Endothelial cell of umbilical vein (primary cell): ENCODE measurements at regions of chrX and their contacts with region 1.

Region 1: GRCh38 chrX:139739138-139739537 is 31.2 kb upstream of the MCF2 start:
- DNase-seq: peak; percentile 44
- H3K4me3 ChIP-seq: no peak overlapping the region
- H3K27ac ChIP-seq: peak overlapping the region; percentile 63
- H3K4me1 ChIP-seq: peaks cover 20% of the 10 kb centered on the region
- H3K27me3 ChIP-seq: no peaks in the 10 kb centered on the region
- CTCF ChIP-seq: no peak
- POLR2A ChIP-seq: no peak

Region 2: GRCh38 chrX:139559383-139560042 is 179.6 kb before region 1 on chrX:
- CTCF ChIA-PET with region 1: no interaction called
- POLR2A ChIA-PET with region 1: no interaction called
- dilution Hi-C with region 1: no loop called
- intact Hi-C with region 1: no loop called
- DNase-seq: peak; percentile 26
- H3K4me3 ChIP-seq: no peak overlapping the region
- H3K27ac ChIP-seq: no peak overlapping the region
- H3K4me1 ChIP-seq: no peaks in the 10 kb centered on the region
- H3K27me3 ChIP-seq: no peaks in the 10 kb centered on the region
- CTCF ChIP-seq: peak; percentile 13 to 29
- POLR2A ChIP-seq: no peak

Region 3: DNA sequence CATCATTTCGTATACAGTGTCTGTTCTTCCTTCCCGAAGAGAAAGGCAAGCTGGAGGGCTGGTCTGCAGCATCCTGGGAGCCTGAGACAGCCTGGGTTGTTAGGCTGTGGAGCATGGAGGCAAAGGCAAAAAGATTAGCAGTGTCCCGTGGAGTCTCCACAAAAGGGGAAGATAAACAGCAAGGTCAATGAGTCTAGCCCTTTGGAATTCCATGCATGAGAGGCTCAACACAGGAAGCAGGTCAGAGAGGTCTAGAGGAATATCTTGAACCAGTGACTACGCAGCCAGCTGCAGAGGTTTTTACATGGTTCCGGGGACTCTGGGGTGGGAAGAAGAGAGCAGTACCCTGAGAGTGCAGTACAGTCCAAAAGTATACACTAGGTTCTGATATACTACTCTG is 19.0 kb before region 1 on chrX:
- CTCF ChIA-PET with region 1: no interaction called
- POLR2A ChIA-PET with region 1: no interaction called
- dilution Hi-C with region 1: no loop called
- intact Hi-C with region 1: loop called (anchors 2 kb)
- DNase-seq: peak; percentile 11
- H3K4me3 ChIP-seq: no peak overlapping the region
- H3K27ac ChIP-seq: no peak overlapping the region
- H3K4me1 ChIP-seq: peaks cover 5% of the 10 kb centered on the region
- H3K27me3 ChIP-seq: no peaks in the 10 kb centered on the region
- CTCF ChIP-seq: no peak
- POLR2A ChIP-seq: no peak

Region 4: GRCh38 chrX:139967300-139967699 is 228.2 kb after region 1 on chrX:
- CTCF ChIA-PET with region 1: no interaction called
- POLR2A ChIA-PET with region 1: no interaction called
- dilution Hi-C with region 1: no loop called
- intact Hi-C with region 1: no loop called
- DNase-seq: no peak
- H3K4me3 ChIP-seq: no peak overlapping the region
- H3K27ac ChIP-seq: no peak overlapping the region
- H3K4me1 ChIP-seq: no peaks in the 10 kb centered on the region
- H3K27me3 ChIP-seq: no peaks in the 10 kb centered on the region
- CTCF ChIP-seq: peak; percentile 11 to 35
- POLR2A ChIP-seq: no peak